Panc1 (cell line): ENCODE measurements at regions of chrX and their contacts with region 1.

Region 1: DNA sequence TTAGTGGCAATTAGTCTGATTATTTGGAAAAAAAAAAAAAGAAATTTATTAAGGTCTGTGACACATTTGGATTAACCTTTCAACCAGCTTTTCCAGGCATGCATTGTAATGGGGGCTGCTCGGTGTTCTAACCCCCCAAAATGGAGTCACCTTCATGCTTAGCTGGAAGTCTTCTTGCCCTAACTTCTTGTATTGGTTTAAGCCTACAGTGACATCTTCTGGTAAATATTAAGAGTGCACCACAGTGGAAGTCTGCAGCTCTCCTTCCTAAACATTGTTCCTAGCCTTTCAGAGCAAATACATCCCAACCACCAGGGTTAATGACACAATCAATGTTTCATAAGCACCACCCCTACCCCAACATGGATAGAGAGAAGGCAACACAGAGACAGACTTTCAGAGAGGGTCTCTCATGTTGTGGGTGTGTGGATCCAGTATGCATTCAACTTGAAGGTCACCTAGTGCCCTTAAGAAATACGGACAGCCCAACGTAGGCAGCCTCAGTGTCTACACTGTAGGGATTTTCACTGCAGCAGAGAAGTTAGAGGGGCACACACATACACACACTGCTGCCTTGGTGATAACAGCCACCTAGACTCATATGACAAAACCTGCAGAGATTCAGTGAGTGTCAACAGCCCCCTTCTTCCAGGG is 142.9 kb upstream of the MBNL3 start:
- DNase-seq: peak; percentile 30
- ATAC-seq: peak; percentile 81
- H3K4me3 ChIP-seq: no peak overlapping the region
- H3K27ac ChIP-seq: no peak overlapping the region
- H3K4me1 ChIP-seq: no peaks in the 10 kb centered on the region
- H3K27me3 ChIP-seq: peaks cover 20% of the 10 kb centered on the region
- CTCF ChIP-seq: peak; percentile 75

Region 2: DNA sequence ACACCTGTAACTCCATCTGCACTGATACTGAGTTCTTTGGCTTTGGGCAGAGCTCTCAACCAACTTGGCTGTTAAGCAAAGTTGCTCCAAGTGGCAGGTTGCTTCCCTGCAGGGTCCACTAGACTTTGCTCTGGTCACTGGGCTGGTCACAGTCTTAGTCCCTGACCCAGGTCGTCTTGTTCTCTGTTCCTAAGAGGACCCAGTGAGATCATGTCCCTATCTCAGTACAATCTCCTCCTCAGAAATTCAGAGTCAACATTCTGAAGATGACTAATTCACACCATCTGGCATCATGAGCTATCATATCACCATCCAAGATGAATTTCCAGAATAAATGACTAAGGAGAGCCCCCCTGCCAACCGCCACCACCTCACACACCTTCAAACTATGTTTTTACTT is 1138.6 kb before region 1 on chrX:
- CTCF ChIA-PET with region 1: no interaction called
- POLR2A ChIA-PET with region 1: no interaction called
- in situ Hi-C with region 1: no loop called
- intact Hi-C with region 1: no loop called
- DNase-seq: no peak
- ATAC-seq: no peak
- H3K4me3 ChIP-seq: no peak overlapping the region
- H3K27ac ChIP-seq: no peak overlapping the region
- H3K4me1 ChIP-seq: no peaks in the 10 kb centered on the region
- H3K27me3 ChIP-seq: no peaks in the 10 kb centered on the region
- CTCF ChIP-seq: no peak

Region 3: GRCh38 chrX:132426695-132427281 is 204.9 kb before region 1 on chrX:
- CTCF ChIA-PET with region 1: no interaction called
- POLR2A ChIA-PET with region 1: no interaction called
- in situ Hi-C with region 1: no loop called
- intact Hi-C with region 1: no loop called
- DNase-seq: no peak
- ATAC-seq: no peak
- H3K4me3 ChIP-seq: no peak overlapping the region
- H3K27ac ChIP-seq: no peak overlapping the region
- H3K4me1 ChIP-seq: no peaks in the 10 kb centered on the region
- H3K27me3 ChIP-seq: peaks cover 2% of the 10 kb centered on the region; the same call in 1 of the 2 replicates
- CTCF ChIP-seq: no peak

Region 4: GRCh38 chrX:132692066-132692465 is 60.4 kb after region 1 on chrX:
- CTCF ChIA-PET with region 1: no interaction called
- POLR2A ChIA-PET with region 1: no interaction called
- in situ Hi-C with region 1: no loop called
- intact Hi-C with region 1: no loop called
- DNase-seq: no peak
- ATAC-seq: no peak
- H3K4me3 ChIP-seq: no peak overlapping the region
- H3K27ac ChIP-seq: no peak overlapping the region
- H3K4me1 ChIP-seq: no peaks in the 10 kb centered on the region
- H3K27me3 ChIP-seq: 0 out of 2 replicates have a peak, but pooled peaks cover 3% of the 10 kb centered on the region
- CTCF ChIP-seq: no peak

Region 5: DNA sequence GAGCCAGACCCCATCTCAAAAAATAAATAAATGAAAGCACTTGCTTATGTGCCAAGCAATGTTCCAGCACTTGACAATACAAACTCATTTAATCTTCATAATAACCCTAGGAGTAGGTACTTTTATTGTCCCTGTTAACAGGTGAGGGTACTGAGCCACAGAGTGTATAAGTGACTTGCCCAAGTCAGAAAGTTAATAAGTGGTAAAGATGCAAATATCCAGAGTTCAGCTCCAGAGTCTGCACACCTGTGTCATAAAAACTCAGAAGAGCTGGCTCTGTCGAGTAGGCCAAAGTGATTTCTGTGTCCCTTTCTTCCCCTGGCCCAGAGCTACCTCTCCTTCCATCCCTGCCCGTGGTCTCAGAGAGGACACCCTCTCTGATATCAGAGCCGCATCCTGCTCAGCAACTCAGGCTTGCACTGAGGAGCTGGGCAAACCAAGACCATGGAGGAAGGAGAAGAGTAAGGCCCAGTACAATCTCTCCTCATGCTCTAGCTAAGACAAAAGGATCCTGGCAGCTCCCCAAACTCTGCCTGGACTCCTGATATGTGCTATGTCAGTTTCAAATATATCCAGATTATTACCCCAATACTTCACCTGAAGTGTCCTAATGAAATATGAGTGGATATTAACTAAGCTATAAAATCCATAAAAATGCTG is 190.4 kb after region 1 on chrX:
- CTCF ChIA-PET with region 1: no interaction called
- POLR2A ChIA-PET with region 1: no interaction called
- in situ Hi-C with region 1: no loop called
- intact Hi-C with region 1: no loop called
- DNase-seq: no peak
- ATAC-seq: no peak
- H3K4me3 ChIP-seq: no peak overlapping the region
- H3K27ac ChIP-seq: no peak overlapping the region
- H3K4me1 ChIP-seq: no peaks in the 10 kb centered on the region
- H3K27me3 ChIP-seq: no peaks in the 10 kb centered on the region
- CTCF ChIP-seq: no peak

Region 6: DNA sequence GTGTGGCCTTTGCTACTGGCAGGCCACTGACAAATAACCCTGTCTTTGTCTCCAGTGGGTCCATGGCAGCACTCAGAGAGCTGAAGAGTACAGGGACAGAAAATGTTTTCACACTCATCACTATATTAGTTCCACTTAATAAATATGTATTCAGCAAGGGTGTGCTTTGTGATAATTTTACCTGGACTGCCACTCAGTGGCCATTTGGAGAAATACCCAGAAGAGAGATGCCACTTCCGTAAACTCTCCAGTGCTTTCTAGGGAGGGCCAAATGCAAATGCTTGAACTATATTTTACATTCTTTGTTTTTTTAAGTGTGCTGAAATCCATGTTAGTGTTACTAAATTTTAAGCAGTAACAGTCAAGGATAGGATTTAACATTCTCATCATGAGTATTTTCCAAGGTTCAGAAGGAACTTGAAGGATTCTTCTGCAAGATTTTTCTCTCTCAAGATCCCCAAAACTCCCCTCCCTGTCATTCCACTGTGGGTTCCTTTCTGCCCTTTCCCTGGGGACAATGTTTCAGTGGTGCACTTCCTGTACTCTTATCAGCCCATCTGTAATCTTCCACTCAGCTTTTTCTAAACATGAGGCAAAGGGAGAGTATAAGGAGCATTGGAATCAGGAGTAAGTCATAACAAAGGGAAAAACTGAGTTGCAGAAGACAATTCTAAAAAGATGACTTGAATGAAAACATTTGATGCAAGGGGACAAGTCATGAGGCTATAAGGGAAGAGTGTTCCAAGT is 540.4 kb after region 1 on chrX:
- CTCF ChIA-PET with region 1: no interaction called
- POLR2A ChIA-PET with region 1: no interaction called
- in situ Hi-C with region 1: no loop called
- intact Hi-C with region 1: loop called (anchors 5 kb)
- DNase-seq: no peak
- ATAC-seq: peak; percentile 74; the same call in 1 of the 2 replicates
- H3K4me3 ChIP-seq: no peak overlapping the region
- H3K27ac ChIP-seq: no peak overlapping the region
- H3K4me1 ChIP-seq: no peaks in the 10 kb centered on the region
- H3K27me3 ChIP-seq: no peaks in the 10 kb centered on the region
- CTCF ChIP-seq: peak; percentile 66